Endothelial cell of umbilical vein (primary cell): ENCODE measurements at regions of chr4 and their contacts with region 1.

Region 1: GRCh38 chr4:119971431-119972084 is 95.1 kb downstream of the MAD2L1 start:
- DNase-seq: no peak
- H3K4me3 ChIP-seq: no peak overlapping the region
- H3K27ac ChIP-seq: no peak overlapping the region
- H3K4me1 ChIP-seq: no peaks in the 10 kb centered on the region
- H3K27me3 ChIP-seq: no peaks in the 10 kb centered on the region
- CTCF ChIP-seq: no peak
- POLR2A ChIP-seq: no peak

Region 2: GRCh38 chr4:121421594-121421993 is 1450.0 kb after region 1 on chr4:
- CTCF ChIA-PET with region 1: no interaction called
- POLR2A ChIA-PET with region 1: no interaction called
- dilution Hi-C with region 1: no loop called
- intact Hi-C with region 1: loop called (anchors 5 kb)
- DNase-seq: no peak
- H3K4me3 ChIP-seq: no peak overlapping the region
- H3K27ac ChIP-seq: no peak overlapping the region
- H3K4me1 ChIP-seq: no peaks in the 10 kb centered on the region
- H3K27me3 ChIP-seq: peaks cover 0 to 2% of the 10 kb centered on the region in 2 experiments
- CTCF ChIP-seq: no peak
- POLR2A ChIP-seq: no peak